ENCODE measurements at regions of chr2 and their contacts with region 1.

Region 1: GRCh38 chr2:127695491-127696472 is 5.5 kb upstream of the SFT2D3 start:
- DNase-seq: no peak
- H3K4me3 Mint-ChIP-seq: no peak overlapping the region
- H3K27ac Mint-ChIP-seq: no peak overlapping the region
- H3K4me1 Mint-ChIP-seq: peaks cover 9% of the 10 kb centered on the region
- H3K27me3 Mint-ChIP-seq: no peaks in the 10 kb centered on the region

Region 2: GRCh38 chr2:127591221-127591923 is 104.4 kb before region 1 on chr2:
- intact Hi-C with region 1: loop called (anchors 5 kb)
- DNase-seq: peak; percentile 37
- H3K4me3 Mint-ChIP-seq: no peak overlapping the region
- H3K27ac Mint-ChIP-seq: no peak overlapping the region
- H3K4me1 Mint-ChIP-seq: no peaks in the 10 kb centered on the region
- H3K27me3 Mint-ChIP-seq: peaks cover 4% of the 10 kb centered on the region

Region 3: GRCh38 chr2:128664499-128664971 is 968.8 kb after region 1 on chr2:
- intact Hi-C with region 1: no loop called
- DNase-seq: no peak
- H3K4me3 Mint-ChIP-seq: no peak overlapping the region
- H3K27ac Mint-ChIP-seq: no peak overlapping the region
- H3K4me1 Mint-ChIP-seq: no peaks in the 10 kb centered on the region
- H3K27me3 Mint-ChIP-seq: peaks cover 18% of the 10 kb centered on the region